ENCODE measurements at regions of chr18 and their contacts with region 1.

Region 1: GRCh38 chr18:12543697-12544096 is 114.2 kb downstream of the SPIRE1 start:
- DNase-seq: no peak
- H3K4me3 Mint-ChIP-seq: no peak overlapping the region
- H3K27ac Mint-ChIP-seq: no peak overlapping the region
- H3K4me1 Mint-ChIP-seq: peaks cover 13% of the 10 kb centered on the region
- H3K27me3 Mint-ChIP-seq: peaks cover 13% of the 10 kb centered on the region

Region 2: GRCh38 chr18:11963991-11964484 is 579.7 kb before region 1 on chr18:
- intact Hi-C with region 1: no loop called
- DNase-seq: no peak
- H3K4me3 Mint-ChIP-seq: no peak overlapping the region
- H3K27ac Mint-ChIP-seq: no peak overlapping the region
- H3K4me1 Mint-ChIP-seq: no peaks in the 10 kb centered on the region
- H3K27me3 Mint-ChIP-seq: peaks cover 4% of the 10 kb centered on the region

Region 3: DNA sequence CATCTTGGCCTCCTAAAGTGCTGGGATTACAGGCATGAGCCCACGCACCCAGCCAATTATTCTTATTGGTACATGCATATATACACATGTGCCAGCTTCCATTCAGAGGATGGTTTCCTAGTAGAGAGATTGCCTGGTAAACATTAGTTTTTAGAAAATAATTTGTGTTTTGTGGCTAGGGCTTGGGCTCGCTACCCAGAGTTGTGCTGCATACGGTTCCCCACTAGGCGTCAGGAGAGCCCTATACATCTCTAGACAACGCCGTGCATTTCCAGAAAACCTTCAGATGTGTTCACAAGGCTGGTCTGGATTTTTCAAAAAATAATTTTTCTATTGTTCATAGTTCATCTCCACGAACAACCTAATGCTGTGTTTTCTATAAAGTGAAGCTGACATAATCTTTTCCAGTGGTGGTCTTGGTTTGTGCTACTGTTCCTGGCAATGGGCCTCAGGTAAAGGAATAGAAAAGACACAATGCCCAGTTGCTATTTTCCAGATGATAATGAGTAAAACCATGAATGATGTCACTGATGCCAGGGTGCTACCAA is 152.0 kb before region 1 on chr18:
- intact Hi-C with region 1: loop called (anchors 10 kb)
- DNase-seq: no peak
- H3K4me3 Mint-ChIP-seq: no peak overlapping the region
- H3K27ac Mint-ChIP-seq: no peak overlapping the region
- H3K4me1 Mint-ChIP-seq: no peaks in the 10 kb centered on the region
- H3K27me3 Mint-ChIP-seq: peaks cover 9% of the 10 kb centered on the region

Region 4: GRCh38 chr18:12470382-12471075 is 73.2 kb before region 1 on chr18:
- intact Hi-C with region 1: no loop called
- DNase-seq: no peak
- H3K4me3 Mint-ChIP-seq: no peak overlapping the region
- H3K27ac Mint-ChIP-seq: no peak overlapping the region
- H3K4me1 Mint-ChIP-seq: no peaks in the 10 kb centered on the region
- H3K27me3 Mint-ChIP-seq: no peaks in the 10 kb centered on the region

Measured in activated T-helper 2 cell treated with anti-CD3 and anti-CD28 coated beads, Interferon-gamma antibody, Interleukin-2, Interleukin-4, amounts not matched to agents 10 μg/mL and 5 μg/mL and 100 μg/mL, durations not matched to agents 14 hours and 24 hours and 36 hours (primary cell).